ENCODE measurements at regions of chr3 and their contacts with region 1.

Region 1: GRCh38 chr3:190566043-190566933 is 52.4 kb downstream of the IL1RAP start:
- DNase-seq: peak; percentile 72
- ATAC-seq: peak; percentile 79
- H3K4me3 Mint-ChIP-seq: no peak overlapping the region
- H3K27ac Mint-ChIP-seq: peak overlapping the region; percentile 40
- H3K4me1 Mint-ChIP-seq: peaks cover 30% of the 10 kb centered on the region
- H3K27me3 Mint-ChIP-seq: no peaks in the 10 kb centered on the region

Region 2: DNA sequence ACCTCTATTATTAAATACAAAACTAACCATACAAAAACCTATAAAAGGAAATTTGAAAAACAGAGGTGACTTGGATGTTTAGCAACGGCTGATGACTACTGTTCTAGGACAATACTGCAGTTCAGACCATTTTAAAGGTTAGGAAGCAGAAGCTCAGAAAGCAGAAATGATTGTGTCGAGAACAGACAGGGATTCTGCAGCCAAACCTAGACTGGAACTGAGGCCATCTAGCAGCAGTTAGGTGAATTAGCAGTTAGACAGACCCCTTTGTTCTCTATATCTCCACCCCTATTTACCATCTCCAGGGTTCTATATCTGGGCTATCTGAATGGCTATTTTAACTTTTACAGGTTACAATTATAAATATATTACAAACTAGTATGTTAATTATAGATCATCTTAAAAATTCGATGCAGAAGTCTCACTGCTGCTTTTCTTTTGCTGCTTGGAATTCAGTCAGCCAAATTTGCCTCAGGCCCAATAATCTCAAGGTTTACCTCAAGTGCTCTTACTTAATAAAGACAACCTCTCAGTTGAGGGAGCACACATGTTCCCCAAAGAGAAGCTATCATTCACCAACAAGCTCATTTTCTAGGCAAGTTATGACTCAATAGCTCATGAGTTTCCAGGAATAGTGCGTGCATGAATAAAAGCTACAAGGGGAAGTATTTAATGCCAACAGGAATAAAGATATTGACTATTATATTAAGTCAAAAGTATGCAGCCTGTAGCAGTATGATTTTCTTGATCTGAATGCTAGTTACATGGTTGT is 61.7 kb before region 1 on chr3:
- CTCF ChIA-PET with region 1: no interaction called
- POLR2A ChIA-PET with region 1: no interaction called
- DNase-seq: no peak
- ATAC-seq: no peak
- H3K4me3 Mint-ChIP-seq: no peak overlapping the region
- H3K27ac Mint-ChIP-seq: no peak overlapping the region
- H3K4me1 Mint-ChIP-seq: peaks cover 4% of the 10 kb centered on the region
- H3K27me3 Mint-ChIP-seq: peaks cover 13% of the 10 kb centered on the region

Region 3: DNA sequence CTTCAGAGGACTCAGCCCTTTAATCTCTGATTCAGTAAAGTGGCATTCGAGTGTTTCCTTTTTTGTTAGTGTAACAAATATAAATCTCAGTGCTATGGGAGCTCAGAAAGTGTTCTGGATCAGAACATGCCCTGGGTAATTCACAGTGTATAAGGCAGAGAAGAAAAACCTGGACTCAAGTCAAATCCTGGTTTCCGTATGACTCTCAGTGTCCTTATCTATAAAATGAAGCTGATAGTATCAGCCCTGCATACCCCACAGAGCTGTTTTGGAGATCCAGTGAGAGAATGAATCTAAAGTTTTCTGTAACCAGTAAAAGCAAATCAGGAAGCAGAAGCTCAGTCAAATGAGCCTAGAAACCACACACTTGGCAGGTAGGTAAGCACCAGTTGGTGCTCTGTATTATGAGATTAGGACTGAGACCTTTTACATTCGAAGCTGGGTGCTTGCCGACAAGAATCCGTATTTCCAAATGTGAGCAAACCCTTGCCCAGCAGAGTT is 14.8 kb after region 1 on chr3:
- CTCF ChIA-PET with region 1: interaction called, 10 read pairs
- POLR2A ChIA-PET with region 1: no interaction called
- DNase-seq: no peak
- ATAC-seq: peak; percentile 23
- H3K4me3 Mint-ChIP-seq: no peak overlapping the region
- H3K27ac Mint-ChIP-seq: no peak overlapping the region
- H3K4me1 Mint-ChIP-seq: peaks cover 16% of the 10 kb centered on the region
- H3K27me3 Mint-ChIP-seq: no peaks in the 10 kb centered on the region

Region 4: DNA sequence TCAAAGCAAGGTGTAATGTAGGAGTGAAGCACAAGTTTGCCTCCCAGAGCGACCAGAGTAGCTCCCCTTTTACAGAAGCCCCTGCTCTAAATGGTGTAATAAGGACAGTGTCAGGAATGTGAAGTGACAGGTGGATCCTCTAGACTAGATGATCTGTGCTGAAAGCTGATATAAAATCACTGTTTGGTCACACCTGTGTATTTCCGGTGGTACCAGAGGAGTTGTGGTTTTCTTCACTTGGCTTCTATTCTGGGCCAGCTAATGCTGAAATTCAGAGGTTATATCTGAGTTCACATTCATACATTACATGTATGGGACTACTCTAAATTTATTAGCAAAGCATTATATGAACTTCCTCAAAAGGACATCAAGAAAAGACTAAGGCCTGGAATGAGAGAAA is 65.0 kb after region 1 on chr3:
- CTCF ChIA-PET with region 1: no interaction called
- POLR2A ChIA-PET with region 1: no interaction called
- DNase-seq: no peak
- ATAC-seq: no peak
- H3K4me3 Mint-ChIP-seq: no peak overlapping the region
- H3K27ac Mint-ChIP-seq: no peak overlapping the region
- H3K4me1 Mint-ChIP-seq: peaks cover 7% of the 10 kb centered on the region
- H3K27me3 Mint-ChIP-seq: no peaks in the 10 kb centered on the region